ENCODE measurements at regions of chr4 and their contacts with region 1.

Region 1: GRCh38 chr4:89158884-89159503 is 47.7 kb downstream of the TIGD2 start:
- DNase-seq: no peak
- H3K4me3 ChIP-seq: no peak overlapping the region
- H3K27ac ChIP-seq: no peak overlapping the region
- H3K4me1 ChIP-seq: no peaks in the 10 kb centered on the region
- H3K27me3 ChIP-seq: no peaks in the 10 kb centered on the region
- CTCF ChIP-seq: peak in 2 of 3 experiments; percentile 37 to 63; a peak in 2 of 4 replicates
- EP300 ChIP-seq: no peak
- POLR2A ChIP-seq: no peak
- RAD21 ChIP-seq: peak; percentile 67 to 72

Region 2: DNA sequence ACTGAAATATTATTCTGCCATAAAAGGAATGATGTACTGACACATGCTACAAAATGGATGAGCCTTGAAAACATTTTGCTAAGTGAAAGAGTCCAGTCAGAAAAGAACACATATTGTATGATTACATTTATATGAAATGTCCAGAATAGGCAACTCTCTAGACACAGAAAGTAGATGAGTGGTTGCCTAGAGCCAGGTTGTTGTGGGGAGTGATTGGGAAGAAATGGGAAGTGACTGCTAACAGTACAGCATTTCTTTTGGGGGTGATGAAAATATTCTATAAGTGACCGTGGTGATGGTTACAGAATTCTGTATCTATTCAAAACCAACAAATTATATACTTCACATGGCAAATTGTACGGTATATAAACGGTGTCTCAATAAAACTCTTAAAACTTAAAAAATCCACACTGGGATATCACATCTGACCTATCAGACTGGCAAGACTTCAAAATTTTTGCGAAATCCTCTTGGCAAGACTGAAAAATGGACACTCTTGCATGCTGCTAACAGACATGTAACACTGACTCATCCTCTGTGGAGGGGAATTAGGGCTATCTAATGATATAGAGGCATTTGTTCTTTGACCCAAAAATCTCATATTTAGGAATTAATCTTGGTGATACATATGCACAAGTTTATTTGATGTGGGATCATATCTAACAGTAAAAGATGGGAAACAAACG is 173.8 kb before region 1 on chr4:
- CTCF ChIA-PET with region 1: no interaction called
- POLR2A ChIA-PET with region 1: no interaction called
- DNase-seq: no peak
- H3K4me3 ChIP-seq: no peak overlapping the region
- H3K27ac ChIP-seq: no peak overlapping the region
- H3K4me1 ChIP-seq: no peaks in the 10 kb centered on the region
- H3K27me3 ChIP-seq: no peaks in the 10 kb centered on the region
- CTCF ChIP-seq: no peak
- EP300 ChIP-seq: no peak
- POLR2A ChIP-seq: no peak
- RAD21 ChIP-seq: no peak

Region 3: GRCh38 chr4:89172860-89173259 is 13.9 kb after region 1 on chr4:
- CTCF ChIA-PET with region 1: interaction called, 11 read pairs
- POLR2A ChIA-PET with region 1: no interaction called
- DNase-seq: no peak
- H3K4me3 ChIP-seq: no peak overlapping the region
- H3K27ac ChIP-seq: no peak overlapping the region
- H3K4me1 ChIP-seq: peaks cover 0 to 4% (median 0%) of the 10 kb centered on the region in 4 experiments; a peak in 1 of 7 replicates
- H3K27me3 ChIP-seq: no peaks in the 10 kb centered on the region
- CTCF ChIP-seq: peak in 1 of 3 experiments; percentile 41; a peak in 1 of 4 replicates
- EP300 ChIP-seq: no peak
- POLR2A ChIP-seq: no peak
- RAD21 ChIP-seq: peak in 1 of 2 experiments; percentile 20; a peak in 2 of 4 replicates